Heart left ventricle (tissue), 16 donors: ENCODE measurements at regions of chr4 and their contacts with region 1.

Region 1: DNA sequence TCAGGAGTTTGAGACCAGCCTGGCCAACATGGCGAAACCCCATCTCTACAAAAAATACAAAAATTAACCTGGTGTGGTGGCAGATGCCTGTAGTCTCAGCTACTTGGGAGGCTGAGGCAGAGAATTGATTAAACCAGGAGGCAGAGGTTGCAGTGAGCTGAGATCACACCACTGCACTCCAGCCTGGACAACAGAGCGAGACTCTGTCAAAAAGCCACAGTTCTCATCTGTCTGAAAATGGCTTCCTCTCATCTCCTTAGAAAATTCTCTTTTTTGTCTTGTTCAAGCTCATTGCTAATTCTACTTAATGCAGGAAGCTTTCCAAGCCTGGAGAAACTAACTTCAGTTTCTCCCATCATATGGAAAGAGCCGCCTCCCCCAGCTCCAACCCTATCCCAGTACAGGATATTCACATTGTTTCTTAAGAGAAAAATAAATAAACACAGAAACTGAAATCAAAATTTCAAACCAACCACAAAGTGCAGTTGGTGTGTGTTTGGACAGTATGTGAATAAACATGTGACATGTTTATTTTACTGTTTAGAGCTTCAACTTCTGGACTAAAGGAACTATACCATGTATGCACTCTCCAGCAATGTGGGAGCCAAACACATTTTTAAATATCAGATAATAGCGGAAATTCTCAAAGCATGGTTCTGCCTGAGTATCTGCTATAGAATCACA is 55.0 kb upstream of the GAB1 start:
- DNase-seq: no peak
- ATAC-seq: peak in 1 of 4 donors; percentile 16
- H3K4me3 ChIP-seq: no peak overlapping the region
- H3K27ac ChIP-seq: peak overlapping the region in 10 of 12 donors; percentile 5 to 62 (median 54)
- H3K4me1 ChIP-seq: peaks cover 0 to 39% (median 7%) of the 10 kb centered on the region in 12 donors
- H3K27me3 ChIP-seq: no peaks in the 10 kb centered on the region
- CTCF ChIP-seq: no peak
- POLR2A ChIP-seq: no peak

Region 2: GRCh38 chr4:143215873-143216272 is 65.8 kb before region 1 on chr4:
- intact Hi-C with region 1: loop called in 1 of 10 experiments (anchors 5 kb)
- DNase-seq: no peak
- ATAC-seq: peak in 2 of 4 donors; percentile 29 to 48
- H3K4me3 ChIP-seq: no peak overlapping the region
- H3K27ac ChIP-seq: peak overlapping the region in 6 of 12 donors; percentile 2 to 36 (median 27)
- H3K4me1 ChIP-seq: peaks cover 0 to 26% (median 3%) of the 10 kb centered on the region in 12 donors
- H3K27me3 ChIP-seq: no peaks in the 10 kb centered on the region
- CTCF ChIP-seq: no peak
- POLR2A ChIP-seq: no peak

Region 3: GRCh38 chr4:143320113-143320512 is 38.5 kb after region 1 on chr4:
- intact Hi-C with region 1: no loop called
- DNase-seq: no peak
- ATAC-seq: peak in 2 of 4 donors; percentile 45 to 60
- H3K4me3 ChIP-seq: no peak overlapping the region
- H3K27ac ChIP-seq: peak overlapping the region in 2 of 12 donors; percentile 11 to 38
- H3K4me1 ChIP-seq: peaks cover 0 to 13% (median 0%) of the 10 kb centered on the region in 12 donors
- H3K27me3 ChIP-seq: no peaks in the 10 kb centered on the region
- CTCF ChIP-seq: no peak
- POLR2A ChIP-seq: no peak